Posterior vena cava (tissue), 2 donors: ENCODE measurements at regions of chr6 and their contacts with region 1.

Region 1: DNA sequence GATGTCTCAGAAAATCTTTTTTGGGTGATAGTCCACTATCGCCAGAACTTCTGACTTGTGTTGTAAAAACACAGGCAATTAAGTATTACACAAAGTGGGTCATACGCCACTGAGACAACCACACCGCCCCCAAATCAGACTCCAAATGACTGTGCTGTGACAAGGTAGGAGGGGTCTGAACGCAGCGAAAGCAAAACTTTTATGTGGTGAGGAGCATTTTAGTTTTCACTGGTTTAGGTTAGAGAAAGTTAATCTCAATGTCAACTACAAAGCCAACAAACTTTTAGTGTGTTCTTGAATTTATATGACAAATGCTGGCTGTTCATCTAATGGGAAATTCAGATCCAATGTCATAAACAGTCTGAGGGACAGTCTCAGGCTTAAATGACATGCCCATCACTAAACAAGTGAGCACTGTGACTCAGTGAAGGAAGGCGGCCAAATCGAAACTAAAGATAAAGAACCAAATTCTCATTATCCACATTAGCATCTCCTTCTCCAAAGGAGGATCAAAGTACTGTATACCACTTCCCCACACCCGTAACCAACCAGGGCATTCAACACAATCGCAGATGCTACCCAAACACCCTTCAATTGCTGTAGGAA is 186.7 kb downstream of the GJA10 start:
- DNase-seq: no peak

Region 2: DNA sequence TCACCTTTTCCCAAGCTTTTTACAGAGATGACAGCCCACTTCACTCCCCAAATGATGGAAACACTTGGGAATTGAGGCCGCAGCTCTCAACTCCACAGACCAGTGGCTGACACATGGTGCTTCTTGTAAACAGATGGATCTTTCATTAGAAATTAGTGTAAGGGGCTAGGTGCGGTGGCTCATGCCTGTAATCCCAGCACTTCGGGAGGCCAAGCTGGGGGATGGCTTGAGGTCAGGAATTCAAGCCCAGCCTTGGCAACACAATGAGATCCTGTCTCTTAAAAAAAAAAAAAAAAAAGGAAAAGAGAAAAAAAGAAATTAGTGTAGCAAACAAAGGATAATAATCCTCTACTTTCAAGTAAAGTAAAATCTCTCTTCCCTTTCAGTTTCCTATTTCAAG is 171.0 kb before region 1 on chr6:
- intact Hi-C with region 1: no loop called
- DNase-seq: no peak

Region 3: DNA sequence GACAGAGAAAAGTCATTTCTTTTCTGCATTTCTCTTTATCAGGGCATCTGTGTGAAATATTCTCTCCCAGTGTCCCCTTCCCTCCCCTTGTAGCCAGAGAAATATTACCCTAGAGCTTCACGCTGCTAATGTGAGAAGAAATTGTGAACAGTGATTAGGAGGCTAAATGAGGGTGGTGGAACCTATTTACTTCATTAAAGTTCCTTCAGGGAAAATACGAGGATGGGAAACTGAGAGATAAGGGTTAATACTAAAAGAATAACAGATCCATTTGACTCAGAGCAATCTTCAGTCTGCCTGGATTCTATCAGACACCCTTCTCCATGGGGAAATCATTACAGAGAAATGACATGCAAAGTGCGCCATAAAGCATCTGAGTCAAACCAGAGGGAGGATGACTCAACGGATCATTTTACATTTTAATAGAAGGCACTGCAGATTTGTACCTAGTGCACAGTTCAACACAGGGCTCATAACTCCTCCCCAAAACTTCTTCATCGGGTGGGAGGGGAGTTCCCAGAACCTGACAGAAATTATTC is 55.4 kb before region 1 on chr6:
- intact Hi-C with region 1: no loop called
- DNase-seq: no peak

Region 4: DNA sequence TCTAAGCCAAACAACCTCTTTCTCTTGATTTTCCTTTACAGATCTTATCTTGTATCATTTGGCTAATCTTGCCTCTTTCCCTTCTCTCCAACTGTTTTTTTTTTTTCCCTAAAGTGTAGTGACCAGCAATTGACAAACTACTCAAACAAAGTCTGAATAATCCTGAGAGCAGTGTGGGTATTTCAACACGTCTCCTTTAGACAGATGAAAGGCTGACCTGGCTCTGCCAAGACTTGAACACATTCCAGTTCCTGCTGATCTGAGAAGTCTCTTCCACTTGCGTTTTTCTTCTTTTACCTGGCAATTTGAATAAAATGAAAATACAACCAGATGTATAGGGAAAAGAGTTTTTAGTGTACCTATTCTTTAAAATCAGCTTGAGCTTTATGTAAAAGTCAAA is 18.3 kb before region 1 on chr6:
- intact Hi-C with region 1: no loop called
- DNase-seq: no peak

Region 5: GRCh38 chr6:90184334-90185298 is 103.6 kb after region 1 on chr6:
- intact Hi-C with region 1: loop called in 1 of 2 experiments (anchors 5 kb)
- DNase-seq: no peak